Adrenal gland (tissue), 19 donors: ENCODE measurements at regions of chr17 and their contacts with region 1.

Region 1: GRCh38 chr17:47970704-47971463 is at the start of gene CDK5RAP3:
- DNase-seq: peak; percentile 100
- H3K4me3 ChIP-seq: peak within 1 kb of the TSS; percentile 49 to 92 (median 82)
- H3K27ac ChIP-seq: peak within 1 kb of the TSS in 4 of 5 donors; percentile 48 to 88 (median 60)
- H3K4me1 ChIP-seq: peaks cover 7 to 20% of the 10 kb centered on the region in 2 donors
- H3K27me3 ChIP-seq: no peaks in the 10 kb centered on the region
- CTCF ChIP-seq: peak; percentile 83 to 99 (median 94)
- POLR2A ChIP-seq: peak in 1 of 2 donors; percentile 80
- total RNA-seq, gene CDK5RAP3: 42.8 to 200 (median 100) TPM

Region 2: GRCh38 chr17:47698749-47699535 is 271.9 kb before region 1 on chr17:
- intact Hi-C with region 1: no loop called
- DNase-seq: peak in 6 of 7 donors; percentile 46 to 83 (median 61)
- H3K4me3 ChIP-seq: no peak overlapping the region
- H3K27ac ChIP-seq: no peak overlapping the region
- H3K4me1 ChIP-seq: peaks cover 0 to 4% of the 10 kb centered on the region in 2 donors
- H3K27me3 ChIP-seq: no peaks in the 10 kb centered on the region
- CTCF ChIP-seq: peak; percentile 73 to 99 (median 87)
- POLR2A ChIP-seq: no peak

Region 3: GRCh38 chr17:47889734-47890529 is 81.0 kb before region 1 on chr17:
- intact Hi-C with region 1: loop called in 1 of 2 experiments (anchors 5 kb)
- DNase-seq: peak; percentile 85 to 95 (median 91)
- H3K4me3 ChIP-seq: no peak overlapping the region
- H3K27ac ChIP-seq: no peak overlapping the region
- H3K4me1 ChIP-seq: peaks cover 5 to 13% of the 10 kb centered on the region in 2 donors
- H3K27me3 ChIP-seq: no peaks in the 10 kb centered on the region
- CTCF ChIP-seq: peak; percentile 95 to 98 (median 97)
- POLR2A ChIP-seq: no peak

Region 4: DNA sequence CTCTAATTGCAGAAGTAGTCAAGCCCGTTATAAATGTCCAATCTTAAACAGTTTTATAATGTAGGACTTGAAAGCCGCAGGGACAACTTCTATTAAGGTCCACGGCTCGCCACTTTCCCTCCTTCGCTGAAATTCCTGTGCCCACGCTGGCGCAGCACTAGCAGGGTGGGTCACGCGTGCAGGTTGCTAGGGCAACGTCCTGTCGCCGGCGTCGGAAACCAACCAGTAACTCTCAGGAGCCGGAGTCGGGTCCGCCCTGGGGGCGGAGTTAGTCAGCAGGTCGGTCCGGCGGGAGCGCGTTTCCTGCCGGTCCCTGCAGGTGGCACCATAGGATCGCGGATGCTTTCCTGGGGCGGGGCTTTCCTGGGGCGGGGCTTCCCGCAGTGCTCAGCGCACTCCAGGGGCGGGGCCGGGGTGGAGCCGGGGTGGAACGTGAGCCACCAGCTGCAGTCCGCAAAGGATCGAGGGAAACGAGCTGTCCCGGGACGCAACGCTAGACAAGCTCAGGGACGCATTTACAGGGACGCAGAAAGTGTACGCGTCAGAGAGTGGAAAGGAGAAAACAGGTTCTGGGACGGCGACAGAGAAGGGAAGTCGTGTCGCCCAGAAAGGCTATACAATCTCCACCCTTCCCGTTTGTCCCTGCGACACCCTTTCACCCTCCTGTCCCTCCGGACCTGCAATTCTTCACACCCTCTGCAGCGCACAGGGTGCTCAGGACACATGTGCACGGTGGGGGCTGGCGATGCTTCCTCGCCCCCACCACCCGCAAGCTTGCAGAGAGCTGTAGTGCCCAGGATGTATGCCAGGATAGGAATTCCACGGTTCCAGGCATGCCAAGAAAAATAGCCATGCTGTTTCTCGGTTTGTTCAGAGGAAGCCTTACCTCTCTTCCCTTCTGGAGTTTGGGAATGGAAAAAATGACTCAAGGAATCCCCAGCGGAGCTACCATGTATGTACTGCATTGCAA is 54.3 kb after region 1 on chr17:
- intact Hi-C with region 1: no loop called
- DNase-seq: peak; percentile 98 to 99 (median 99)
- H3K4me3 ChIP-seq: peak overlapping the region in 2 of 4 donors; percentile 30 to 59
- H3K27ac ChIP-seq: peak overlapping the region; percentile 64 to 93 (median 84)
- H3K4me1 ChIP-seq: peaks cover 30 to 37% of the 10 kb centered on the region in 2 donors
- H3K27me3 ChIP-seq: no peaks in the 10 kb centered on the region
- CTCF ChIP-seq: peak; percentile 67 to 92 (median 82)
- POLR2A ChIP-seq: peak in 1 of 2 donors; percentile 85